ENCODE measurements at regions of chr1 and their contacts with region 1.

Region 1: DNA sequence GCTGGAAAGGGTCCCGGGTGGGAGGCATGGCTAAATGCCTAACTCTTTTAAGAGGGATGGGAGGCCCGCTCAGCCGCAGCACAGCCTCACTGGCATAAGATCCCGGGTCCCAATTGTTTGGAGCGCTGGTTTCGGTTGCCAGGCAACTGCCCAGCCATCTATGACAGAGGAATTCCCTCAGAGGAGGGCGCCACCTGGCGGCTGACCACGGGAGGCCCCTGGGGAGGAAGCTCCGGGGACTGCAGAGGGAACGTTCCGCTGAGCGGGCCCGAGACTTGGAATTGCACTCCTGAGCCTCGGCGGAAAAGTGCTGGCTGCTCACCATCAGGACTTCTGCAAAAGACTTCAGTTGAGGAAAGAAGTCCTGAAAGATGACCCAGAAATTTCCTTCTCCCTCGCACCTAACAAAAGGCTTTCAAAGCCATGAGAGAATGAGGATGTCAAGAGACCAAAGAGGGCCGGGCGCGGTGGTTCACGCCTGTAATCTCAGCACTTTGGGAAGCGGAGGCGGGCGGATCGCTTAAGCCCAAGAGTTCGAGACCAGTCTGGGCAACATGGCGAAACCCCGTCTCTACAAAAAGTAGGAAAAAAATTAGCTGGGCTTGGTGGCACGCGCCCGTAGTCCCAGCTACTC is 1.1 kb upstream of the ELAPOR1 start:
- DNase-seq: peak; percentile 86 to 94 (median 89)
- H3K4me3 ChIP-seq: peak overlapping the region; percentile 2
- H3K27ac ChIP-seq: no peak overlapping the region
- H3K4me1 ChIP-seq: peaks cover 5% of the 10 kb centered on the region
- H3K27me3 ChIP-seq: no peaks in the 10 kb centered on the region
- CTCF ChIP-seq: peak; percentile 68 to 79 (median 70)
- EP300 ChIP-seq: no peak
- POLR2A ChIP-seq: no peak

Region 2: GRCh38 chr1:108963052-108963686 is 149.6 kb before region 1 on chr1 and contains the start of gene CLCC1:
- intact Hi-C with region 1: loop called in 1 of 4 experiments (anchors 10 kb)
- DNase-seq: peak; percentile 89 to 93 (median 90)
- H3K4me3 ChIP-seq: peak within 1 kb of the TSS; percentile 74
- H3K27ac ChIP-seq: peak within 1 kb of the TSS; percentile 82 to 97
- H3K4me1 ChIP-seq: peaks cover 8% of the 10 kb centered on the region
- H3K27me3 ChIP-seq: no peaks in the 10 kb centered on the region
- CTCF ChIP-seq: peak in 1 of 3 donors; percentile 22
- EP300 ChIP-seq: no peak
- POLR2A ChIP-seq: peak; percentile 88
- total RNA-seq, gene CLCC1: 19.2 to 38.4 (median 34.6) TPM

Region 3: DNA sequence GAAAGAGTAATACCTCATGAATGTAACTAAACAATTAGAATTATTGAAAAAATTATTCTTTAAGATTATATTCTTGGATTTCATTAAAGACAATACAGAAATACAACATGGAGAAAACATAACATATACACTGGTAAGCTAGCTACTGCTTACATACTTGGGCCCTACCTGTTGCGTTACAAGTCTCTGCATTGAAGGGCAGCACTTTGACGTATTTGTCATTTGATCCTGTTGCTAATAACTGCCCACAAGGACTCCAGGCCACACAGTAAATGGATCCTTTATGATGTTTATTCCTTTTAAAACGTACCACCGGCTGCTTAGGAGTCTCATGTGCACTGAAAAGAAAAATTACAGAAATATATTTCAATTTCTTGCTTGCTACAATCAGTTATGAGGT is 129.7 kb before region 1 on chr1:
- intact Hi-C with region 1: no loop called
- DNase-seq: no peak
- H3K4me3 ChIP-seq: no peak overlapping the region
- H3K27ac ChIP-seq: no peak overlapping the region
- H3K4me1 ChIP-seq: no peaks in the 10 kb centered on the region
- H3K27me3 ChIP-seq: no peaks in the 10 kb centered on the region
- CTCF ChIP-seq: no peak
- EP300 ChIP-seq: no peak
- POLR2A ChIP-seq: no peak

Region 4: DNA sequence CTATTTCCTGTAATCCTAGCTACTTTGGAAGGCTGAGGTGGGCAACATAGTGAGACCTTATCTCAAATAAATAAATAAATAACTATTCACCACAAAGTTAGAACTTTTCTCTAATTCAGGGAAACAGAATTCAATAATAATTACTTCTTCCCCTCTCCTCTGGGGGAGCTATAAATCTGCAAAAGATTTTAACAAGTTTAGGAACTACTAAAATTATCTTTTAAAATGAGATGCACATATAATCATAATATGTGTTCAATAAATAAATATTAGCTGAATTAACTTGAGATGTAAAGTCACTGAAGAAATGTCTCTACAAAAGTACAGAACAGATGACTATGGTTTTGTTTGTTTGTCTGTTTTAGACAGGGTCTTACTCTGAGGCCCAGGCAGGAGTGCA is 84.9 kb before region 1 on chr1:
- intact Hi-C with region 1: loop called in 1 of 4 experiments (anchors 10 kb)
- DNase-seq: no peak
- H3K4me3 ChIP-seq: no peak overlapping the region
- H3K27ac ChIP-seq: no peak overlapping the region
- H3K4me1 ChIP-seq: no peaks in the 10 kb centered on the region
- H3K27me3 ChIP-seq: no peaks in the 10 kb centered on the region
- CTCF ChIP-seq: no peak
- EP300 ChIP-seq: no peak
- POLR2A ChIP-seq: no peak

Region 5: GRCh38 chr1:109181105-109181806 is 68.5 kb after region 1 on chr1:
- intact Hi-C with region 1: no loop called
- DNase-seq: no peak
- H3K4me3 ChIP-seq: no peak overlapping the region
- H3K27ac ChIP-seq: no peak overlapping the region
- H3K4me1 ChIP-seq: no peaks in the 10 kb centered on the region
- H3K27me3 ChIP-seq: no peaks in the 10 kb centered on the region
- CTCF ChIP-seq: no peak
- EP300 ChIP-seq: no peak
- POLR2A ChIP-seq: no peak

Region 6: DNA sequence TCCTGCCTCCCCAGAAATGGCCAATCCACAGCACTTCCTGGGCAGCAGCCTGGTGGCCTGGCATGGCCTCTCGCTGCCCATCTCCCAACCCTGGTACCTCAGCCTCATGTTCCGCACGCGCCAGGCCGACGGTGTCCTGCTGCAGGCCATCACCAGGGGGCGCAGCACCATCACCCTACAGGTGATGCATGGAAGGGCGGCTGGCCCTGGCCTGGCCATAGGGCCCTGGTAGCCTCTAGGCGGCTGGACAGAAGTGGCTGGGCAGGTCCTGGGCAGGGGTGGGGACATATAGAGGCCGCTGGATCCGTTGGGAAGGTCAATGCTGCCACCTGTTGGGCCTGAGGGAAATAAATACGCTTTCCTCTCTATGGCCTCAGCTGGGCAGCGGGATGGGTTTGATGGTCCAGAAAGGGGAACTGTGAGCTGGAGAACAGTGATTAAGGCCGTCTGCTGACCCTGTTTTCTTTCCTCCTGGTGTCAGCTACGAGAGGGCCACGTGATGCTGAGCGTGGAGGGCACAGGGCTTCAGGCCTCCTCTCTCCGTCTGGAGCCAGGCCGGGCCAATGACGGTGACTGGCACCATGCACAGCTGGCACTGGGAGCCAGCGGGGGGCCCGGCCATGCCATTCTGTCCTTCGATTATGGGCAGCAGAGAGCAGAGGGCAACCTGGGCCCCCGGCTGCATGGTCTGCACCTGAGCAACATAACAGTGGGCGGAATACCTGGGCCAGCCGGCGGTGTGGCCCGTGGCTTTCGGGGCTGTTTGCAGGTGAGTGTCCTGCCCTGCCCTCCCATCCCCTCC is 151.0 kb after region 1 on chr1:
- intact Hi-C with region 1: loop called in 1 of 4 experiments (anchors 10 kb)
- DNase-seq: peak; percentile 62 to 86 (median 79)
- H3K4me3 ChIP-seq: no peak overlapping the region
- H3K27ac ChIP-seq: no peak overlapping the region
- H3K4me1 ChIP-seq: no peaks in the 10 kb centered on the region
- H3K27me3 ChIP-seq: no peaks in the 10 kb centered on the region
- CTCF ChIP-seq: peak; percentile 76 to 98 (median 94)
- EP300 ChIP-seq: no peak
- POLR2A ChIP-seq: no peak

Measured in ovary (tissue), 10 donors.